ENCODE measurements at regions of chr17 and their contacts with region 1.

Region 1: DNA sequence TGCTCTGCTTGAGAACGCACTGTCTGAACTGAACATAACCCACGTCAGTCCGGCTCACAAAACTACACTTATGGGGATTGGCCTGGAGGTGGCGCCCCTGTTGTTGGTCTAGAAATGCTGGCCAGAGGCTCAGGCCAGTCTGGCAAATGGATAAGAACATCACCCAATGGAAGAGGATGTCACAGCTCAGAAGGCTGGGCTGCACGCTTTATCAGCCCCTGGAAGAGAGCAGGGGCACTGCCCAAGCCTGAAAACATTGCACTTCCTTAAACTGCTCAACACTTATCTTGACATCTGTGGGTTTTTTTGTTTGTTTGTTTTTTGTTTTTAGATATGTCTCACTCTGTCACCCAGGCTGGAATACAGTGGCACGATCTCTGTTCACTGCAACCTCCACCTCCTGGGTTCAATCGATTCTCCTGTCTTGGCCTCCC is 24.8 kb upstream of the BPTF start:
- DNase-seq: peak; percentile 82

Region 2: DNA sequence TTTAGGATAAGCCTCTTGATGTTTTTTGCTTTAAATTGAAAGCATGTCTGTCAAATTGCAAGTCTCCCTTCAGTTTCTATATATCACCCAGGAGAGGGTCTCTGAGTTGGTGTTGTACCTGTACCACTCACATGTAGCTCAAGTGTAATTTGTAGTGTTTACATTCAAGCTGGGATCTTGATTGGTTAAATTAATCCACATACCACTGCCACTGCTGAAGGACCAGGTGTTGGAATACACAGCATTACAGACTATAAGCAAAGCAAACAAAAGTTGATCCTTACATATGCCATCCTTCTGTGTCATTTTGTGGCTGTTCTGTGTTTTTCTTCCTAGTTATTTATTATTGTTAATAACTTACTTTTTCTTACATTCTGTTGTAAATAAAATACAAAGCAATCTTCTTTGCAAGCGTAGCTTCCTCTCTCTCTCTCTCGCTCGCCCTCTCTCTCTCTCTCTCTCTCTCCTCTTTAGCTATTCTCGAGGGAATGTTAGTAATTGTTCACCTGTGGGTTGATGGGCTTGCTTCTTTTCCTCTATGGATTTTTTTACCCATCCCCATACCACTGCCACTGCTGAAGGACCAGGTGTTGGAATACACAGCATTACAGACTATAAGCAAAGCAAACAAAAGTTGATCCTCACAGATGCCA is 103.5 kb before region 1 on chr17:
- CTCF ChIA-PET with region 1: no interaction called
- POLR2A ChIA-PET with region 1: no interaction called
- DNase-seq: no peak

Region 3: DNA sequence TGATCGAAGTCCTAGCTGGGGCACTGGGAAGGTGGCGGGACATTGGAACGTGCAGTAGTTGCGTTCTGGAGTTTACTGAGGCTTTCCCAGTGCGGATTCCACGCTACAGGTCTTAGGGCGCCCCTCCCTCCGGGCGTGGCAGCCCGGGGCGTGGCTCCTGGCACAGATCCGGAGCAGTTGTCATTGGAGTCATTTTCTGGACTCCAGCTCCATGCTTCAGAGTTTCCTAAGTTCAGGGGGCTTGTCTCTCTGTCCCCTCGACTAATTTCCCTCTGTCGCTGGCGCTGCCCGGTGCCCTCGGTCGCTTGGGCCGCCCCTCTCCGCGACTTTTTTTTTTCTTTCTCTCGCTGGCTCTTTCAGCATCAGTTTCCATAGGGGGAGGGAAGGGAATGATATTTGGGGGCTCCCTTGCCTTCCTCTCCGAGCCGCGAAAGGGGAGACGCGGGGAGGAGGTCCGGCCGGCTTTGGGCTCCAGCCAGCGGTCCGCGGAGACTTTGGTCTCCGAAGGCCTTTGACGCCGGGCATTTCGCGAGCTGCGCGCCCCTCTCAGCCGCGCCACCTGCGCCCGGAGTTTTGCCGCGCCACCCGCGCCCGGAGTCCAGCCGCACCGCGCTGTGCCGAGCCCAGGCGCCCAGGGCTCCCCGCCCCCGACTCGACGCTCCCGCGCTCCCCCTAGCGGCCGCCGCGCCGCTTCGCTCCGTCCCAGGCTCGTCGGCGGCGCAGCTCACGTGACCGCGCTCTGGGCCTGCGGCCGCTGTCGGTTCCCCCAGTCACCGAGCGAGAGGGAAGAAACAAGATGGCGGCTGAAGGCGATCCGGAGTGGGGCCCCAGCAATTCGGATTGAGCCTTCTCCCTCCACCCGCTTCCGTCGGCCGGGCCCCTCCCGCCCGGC is 24.5 kb after region 1 on chr17 and contains the start of gene BPTF:
- CTCF ChIA-PET with region 1: interaction called, 6 read pairs
- POLR2A ChIA-PET with region 1: interaction called, 21 read pairs
- DNase-seq: peak; percentile 93

Region 4: DNA sequence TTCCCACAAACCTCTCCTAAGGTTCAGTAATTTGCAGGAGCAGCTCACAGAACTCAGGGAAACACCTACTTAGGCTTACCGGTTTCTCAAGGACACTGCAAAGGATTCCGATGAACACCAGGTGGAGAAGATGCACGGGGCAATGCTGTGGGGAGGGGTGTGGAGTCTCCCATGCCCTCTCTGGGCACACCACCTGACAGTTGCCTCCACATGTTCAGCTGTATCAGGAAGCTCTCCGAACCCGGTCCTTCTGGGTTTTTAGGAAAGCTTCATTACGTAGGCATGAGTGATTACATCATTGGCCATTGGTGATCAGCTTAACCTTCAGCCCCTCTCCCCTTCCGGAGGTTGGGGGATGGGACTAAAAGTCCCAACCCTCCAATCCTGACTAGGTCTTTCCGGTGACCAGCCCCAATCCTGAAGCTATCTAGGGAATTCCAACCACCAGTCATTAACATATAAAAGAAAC is 174.1 kb after region 1 on chr17:
- CTCF ChIA-PET with region 1: no interaction called
- POLR2A ChIA-PET with region 1: no interaction called
- DNase-seq: no peak